Uterus (tissue), 4 donors: ENCODE measurements at regions of chr12 and their contacts with region 1.

Region 1: DNA sequence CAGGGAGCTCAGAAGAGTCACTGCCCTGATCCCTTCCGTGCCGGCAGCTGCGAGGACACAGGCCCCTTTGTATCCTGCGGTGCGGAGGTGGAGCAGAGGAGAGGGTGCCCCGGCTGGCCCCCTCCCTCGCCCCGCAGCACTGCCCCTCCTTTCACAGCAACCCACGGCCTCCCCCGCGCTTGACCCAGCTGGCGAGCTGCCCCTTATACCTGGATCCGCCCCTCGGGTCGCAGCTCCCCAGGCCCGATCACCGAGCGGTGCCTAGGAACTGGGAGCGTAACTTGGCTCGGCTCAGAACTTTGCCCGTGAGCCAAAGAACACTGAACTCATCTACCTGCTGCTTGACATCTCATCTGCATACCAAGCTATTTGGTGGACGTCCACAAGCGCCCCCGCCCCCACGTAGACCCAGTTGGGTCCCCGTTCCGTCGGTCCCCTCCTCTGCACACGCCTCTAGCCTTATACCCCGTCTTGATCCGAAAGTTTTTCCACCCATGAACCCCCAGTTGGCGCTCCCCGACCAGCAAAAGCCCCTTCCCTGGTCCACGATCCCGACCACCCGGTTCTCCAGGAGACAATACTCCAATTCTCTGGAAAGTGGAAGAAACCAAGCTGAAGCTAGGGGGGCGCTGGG is 697 bp upstream of the DNAJC14 start:
- DNase-seq: peak; percentile 71 to 73
- H3K4me3 ChIP-seq: peak overlapping the region; percentile 66 to 98
- H3K27ac ChIP-seq: peak overlapping the region; percentile 94 to 95
- H3K4me1 ChIP-seq: peaks cover 4 to 12% of the 10 kb centered on the region in 2 donors
- H3K27me3 ChIP-seq: no peaks in the 10 kb centered on the region
- CTCF ChIP-seq: no peak
- POLR2A ChIP-seq: no peak

Region 2: DNA sequence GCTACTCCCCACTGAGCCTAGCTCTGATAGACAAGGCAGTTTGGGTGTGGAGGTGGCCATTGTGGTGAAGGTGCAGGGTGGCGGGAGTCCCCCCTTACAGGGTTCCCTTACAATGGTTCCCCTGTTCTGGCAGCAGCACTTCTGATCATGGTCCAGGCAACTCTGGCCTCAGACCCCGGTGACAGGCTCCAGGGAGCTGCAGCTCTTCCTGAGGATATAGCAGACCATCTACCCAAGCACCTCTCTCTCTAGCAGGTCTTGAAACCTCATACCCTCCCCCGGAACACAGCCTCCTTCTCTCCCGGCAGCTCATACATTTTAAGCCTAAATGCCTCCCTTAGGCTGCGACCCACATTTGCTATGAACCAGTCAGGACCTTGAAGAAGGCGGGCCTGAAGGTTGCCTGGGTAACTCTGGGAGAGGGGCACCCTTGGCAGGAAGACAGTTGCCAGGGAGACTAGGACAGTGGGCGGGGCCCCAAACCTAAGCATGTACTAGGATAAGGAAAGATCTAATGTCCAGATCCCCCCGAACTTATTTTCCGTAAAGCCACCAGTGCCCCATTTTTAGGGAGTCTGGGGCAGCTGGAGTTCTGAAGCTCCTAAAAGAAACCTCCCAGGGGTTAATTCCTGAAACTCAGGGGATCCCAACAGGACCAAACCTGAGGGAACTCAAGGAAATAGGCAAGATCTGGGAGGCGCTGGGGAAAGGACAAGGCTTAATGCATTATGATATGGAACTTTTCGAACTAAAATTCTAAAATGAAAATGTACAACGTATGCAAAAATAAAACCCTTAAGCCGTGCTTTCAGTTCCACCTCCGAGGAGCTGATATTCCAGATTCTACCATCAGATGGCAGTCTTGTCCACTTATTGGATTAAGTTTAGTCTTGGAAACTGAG is 91.7 kb before region 1 on chr12:
- intact Hi-C with region 1: no loop called
- DNase-seq: peak; percentile 85 to 90
- H3K4me3 ChIP-seq: peak overlapping the region; percentile 53 to 56
- H3K27ac ChIP-seq: peak overlapping the region; percentile 86 to 87
- H3K4me1 ChIP-seq: peaks cover 0 to 5% of the 10 kb centered on the region in 2 donors
- H3K27me3 ChIP-seq: no peaks in the 10 kb centered on the region
- CTCF ChIP-seq: peak; percentile 85 to 98 (median 92)
- POLR2A ChIP-seq: no peak

Region 3: DNA sequence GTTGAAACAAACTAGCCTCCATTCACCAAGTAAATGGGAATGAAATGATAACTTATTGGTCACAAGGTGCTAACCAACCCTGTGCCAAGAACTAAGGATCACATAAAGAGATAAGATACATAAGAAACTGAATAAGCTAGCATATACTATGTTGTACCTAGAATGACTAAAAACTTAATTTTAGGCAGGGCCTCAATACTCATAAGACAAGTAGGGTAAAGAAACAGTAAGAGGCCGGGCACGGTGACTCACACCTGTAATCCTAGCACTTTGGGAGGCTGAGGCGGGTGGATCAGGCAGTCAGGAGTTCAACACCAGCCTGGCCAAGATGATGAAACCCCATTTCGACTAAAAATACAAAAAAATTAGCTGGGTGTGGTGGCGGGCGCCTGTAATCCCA is 69.4 kb before region 1 on chr12:
- intact Hi-C with region 1: no loop called
- DNase-seq: no peak
- H3K4me3 ChIP-seq: no peak overlapping the region
- H3K27ac ChIP-seq: no peak overlapping the region
- H3K4me1 ChIP-seq: no peaks in the 10 kb centered on the region
- H3K27me3 ChIP-seq: no peaks in the 10 kb centered on the region
- CTCF ChIP-seq: no peak
- POLR2A ChIP-seq: no peak

Region 4: GRCh38 chr12:55885113-55885512 is 55.0 kb after region 1 on chr12:
- intact Hi-C with region 1: no loop called
- DNase-seq: no peak
- H3K4me3 ChIP-seq: no peak overlapping the region
- H3K27ac ChIP-seq: no peak overlapping the region
- H3K4me1 ChIP-seq: no peaks in the 10 kb centered on the region
- H3K27me3 ChIP-seq: no peaks in the 10 kb centered on the region
- CTCF ChIP-seq: no peak
- POLR2A ChIP-seq: no peak

Region 5: DNA sequence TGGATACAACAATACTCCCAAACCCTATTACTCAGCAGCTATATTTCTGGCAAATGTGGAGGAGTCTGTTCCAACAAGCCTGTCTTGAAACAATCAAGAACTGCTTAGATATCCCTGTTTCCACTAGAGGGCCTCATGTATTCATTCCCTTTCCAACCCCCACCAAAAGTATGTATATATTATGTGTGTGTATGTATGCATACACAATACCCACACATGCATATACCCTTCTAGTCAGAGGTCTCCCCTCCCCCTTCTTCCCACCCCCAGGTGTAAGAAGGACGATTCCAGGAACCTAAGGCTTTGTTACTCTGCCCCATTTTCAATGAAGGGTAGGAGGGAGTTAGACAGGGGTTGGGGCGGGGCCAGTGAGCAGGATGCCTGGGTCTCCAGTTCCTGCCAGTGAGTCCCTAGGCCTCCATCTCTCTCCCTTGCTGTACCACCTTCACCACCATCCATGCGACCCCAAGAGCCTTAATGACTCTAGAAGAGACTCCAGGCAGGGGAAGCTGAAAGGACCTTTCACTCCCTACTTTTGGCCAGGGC is 100.8 kb after region 1 on chr12 and contains the start of gene DGKA:
- intact Hi-C with region 1: loop called (anchors 5 kb)
- DNase-seq: peak; percentile 41 to 48
- H3K4me3 ChIP-seq: peak within 1 kb of the TSS; percentile 77 to 79
- H3K27ac ChIP-seq: peak within 1 kb of the TSS; percentile 83 to 91
- H3K4me1 ChIP-seq: peaks cover 7 to 9% of the 10 kb centered on the region in 2 donors
- H3K27me3 ChIP-seq: no peaks in the 10 kb centered on the region
- CTCF ChIP-seq: peak; percentile 40 to 66 (median 50)
- POLR2A ChIP-seq: no peak
- total RNA-seq, gene DGKA: 24.0 to 183 (median 55.1) TPM